Upper lobe of right lung (tissue), 1 donor: ENCODE measurements at regions of chr3 and their contacts with region 1.

Region 1: GRCh38 chr3:42443819-42444436 is 33.5 kb upstream of the LYZL4 start:
- DNase-seq: peak; percentile 91
- ATAC-seq: peak; percentile 96
- H3K4me3 ChIP-seq: no peak overlapping the region
- H3K27ac ChIP-seq: no peak overlapping the region
- H3K4me1 ChIP-seq: no peaks in the 10 kb centered on the region
- H3K27me3 ChIP-seq: peaks cover 5% of the 10 kb centered on the region
- CTCF ChIP-seq: peak; percentile 99

Region 2: DNA sequence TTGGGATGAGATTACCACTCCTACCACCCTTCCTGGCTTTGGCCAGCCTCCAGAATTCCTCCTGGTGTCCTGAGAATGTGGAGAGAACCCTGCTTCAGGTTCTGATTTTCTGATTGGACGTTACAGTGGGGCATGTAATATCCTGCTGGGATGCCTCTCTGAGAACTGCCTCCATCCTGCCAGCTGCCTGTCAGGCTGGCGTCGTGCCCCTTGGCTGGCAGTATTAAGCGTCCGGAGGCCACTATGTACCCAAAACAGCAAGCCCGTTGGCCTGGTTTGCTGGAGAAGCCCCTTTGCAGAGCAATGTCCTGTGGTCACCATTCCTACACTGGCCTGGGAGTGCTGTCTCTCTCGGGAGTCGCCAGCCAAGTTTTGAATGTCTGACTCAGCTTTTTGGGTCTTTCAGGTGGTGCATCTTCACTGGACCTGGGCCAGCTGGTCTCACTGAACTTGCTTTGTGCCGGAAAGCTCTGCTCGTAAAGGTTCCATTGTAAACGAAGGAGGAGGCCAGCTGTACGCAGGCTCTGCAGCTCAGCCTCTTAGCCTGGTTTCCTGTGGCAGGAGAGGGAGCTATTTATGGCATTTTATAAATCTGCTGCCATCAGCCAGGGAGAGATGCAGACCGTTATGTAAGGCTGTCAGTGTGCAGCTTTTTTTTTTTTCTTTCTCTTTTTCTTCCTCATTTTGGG is 371.9 kb before region 1 on chr3:
- intact Hi-C with region 1: no loop called
- DNase-seq: no peak
- ATAC-seq: peak; percentile 78
- H3K4me3 ChIP-seq: peak overlapping the region; percentile 25
- H3K27ac ChIP-seq: peak overlapping the region; percentile 83
- H3K4me1 ChIP-seq: peaks cover 48% of the 10 kb centered on the region
- H3K27me3 ChIP-seq: no peaks in the 10 kb centered on the region
- CTCF ChIP-seq: no peak

Region 3: GRCh38 chr3:42229942-42230688 is 213.8 kb before region 1 on chr3:
- intact Hi-C with region 1: loop called (anchors 10 kb)
- DNase-seq: no peak
- ATAC-seq: peak; percentile 36
- H3K4me3 ChIP-seq: no peak overlapping the region
- H3K27ac ChIP-seq: no peak overlapping the region
- H3K4me1 ChIP-seq: no peaks in the 10 kb centered on the region
- H3K27me3 ChIP-seq: no peaks in the 10 kb centered on the region
- CTCF ChIP-seq: peak; percentile 45

Region 4: GRCh38 chr3:42247576-42248027 is 196.3 kb before region 1 on chr3:
- intact Hi-C with region 1: loop called (anchors 5 kb)
- DNase-seq: no peak
- ATAC-seq: peak; percentile 85
- H3K4me3 ChIP-seq: no peak overlapping the region
- H3K27ac ChIP-seq: no peak overlapping the region
- H3K4me1 ChIP-seq: no peaks in the 10 kb centered on the region
- H3K27me3 ChIP-seq: no peaks in the 10 kb centered on the region
- CTCF ChIP-seq: peak; percentile 72

Region 5: DNA sequence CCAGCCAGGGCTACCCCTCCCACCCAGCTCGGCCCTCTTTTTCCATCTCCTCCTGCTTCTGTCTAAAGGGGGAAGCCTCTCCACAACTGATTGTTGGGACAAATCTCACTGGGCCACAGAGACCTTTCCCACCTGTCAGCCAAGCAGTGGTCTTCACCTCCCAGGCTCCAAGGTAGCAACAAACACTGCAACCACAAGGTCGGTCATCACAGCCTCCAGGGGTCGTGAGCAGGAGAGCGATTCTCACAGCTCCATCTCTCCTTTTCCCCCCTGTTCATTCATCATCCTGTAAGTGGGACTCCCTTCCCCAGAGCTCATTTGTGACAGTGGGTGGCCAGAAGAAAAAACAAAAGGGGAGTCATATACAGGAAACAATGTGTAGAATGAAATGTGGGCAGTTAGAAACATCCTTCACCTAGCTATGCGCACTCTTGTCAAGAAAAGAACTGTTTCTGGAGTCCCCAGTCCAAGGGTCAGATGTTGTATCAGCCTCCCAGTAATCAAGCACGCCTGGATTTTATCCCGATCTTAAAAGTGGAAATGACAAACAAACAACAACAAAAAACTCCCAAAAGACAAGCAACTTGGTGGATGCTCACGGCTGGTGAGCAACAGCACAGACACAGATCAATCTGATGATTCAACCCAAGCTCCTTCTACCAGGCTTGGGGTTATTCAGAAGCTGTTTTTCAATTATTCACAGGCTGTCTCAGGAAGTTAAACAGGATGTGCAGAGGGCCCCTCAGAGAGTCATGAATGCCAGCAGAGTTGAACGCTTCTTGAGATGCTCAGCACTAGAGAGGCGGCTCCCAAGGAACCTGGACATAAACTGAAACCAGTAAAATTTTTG is 55.9 kb before region 1 on chr3:
- intact Hi-C with region 1: no loop called
- DNase-seq: no peak
- ATAC-seq: no peak
- H3K4me3 ChIP-seq: no peak overlapping the region
- H3K27ac ChIP-seq: no peak overlapping the region
- H3K4me1 ChIP-seq: no peaks in the 10 kb centered on the region
- H3K27me3 ChIP-seq: no peaks in the 10 kb centered on the region
- CTCF ChIP-seq: no peak

Region 6: GRCh38 chr3:42526616-42527367 is 82.9 kb after region 1 on chr3:
- intact Hi-C with region 1: no loop called
- DNase-seq: no peak
- ATAC-seq: no peak
- H3K4me3 ChIP-seq: no peak overlapping the region
- H3K27ac ChIP-seq: no peak overlapping the region
- H3K4me1 ChIP-seq: peaks cover 12% of the 10 kb centered on the region
- H3K27me3 ChIP-seq: no peaks in the 10 kb centered on the region
- CTCF ChIP-seq: no peak

Region 7: GRCh38 chr3:42600111-42600988 is 156.4 kb after region 1 on chr3 and contains the start of gene NKTR:
- intact Hi-C with region 1: no loop called
- DNase-seq: peak; percentile 97
- ATAC-seq: peak; percentile 96
- H3K4me3 ChIP-seq: peak within 1 kb of the TSS; percentile 90
- H3K27ac ChIP-seq: peak within 1 kb of the TSS; percentile 94
- H3K4me1 ChIP-seq: peaks cover 28% of the 10 kb centered on the region
- H3K27me3 ChIP-seq: no peaks in the 10 kb centered on the region
- CTCF ChIP-seq: no peak
- total RNA-seq, gene NKTR: 92.1 TPM